Activated T-helper 1 cell treated with anti-CD3 and anti-CD28 coated beads, Interleukin-12 subunit alpha, Interleukin-12 subunit beta, Interleukin-2, Interleukin-4 antibody, amounts not matched to agents 30 ng/mL and 10 ng/mL and 1 ng/mL, durations not matched to agents 14 hours and 24 hours and 36 hours (primary cell): ENCODE measurements at regions of chr1 and their contacts with region 1.

Region 1: DNA sequence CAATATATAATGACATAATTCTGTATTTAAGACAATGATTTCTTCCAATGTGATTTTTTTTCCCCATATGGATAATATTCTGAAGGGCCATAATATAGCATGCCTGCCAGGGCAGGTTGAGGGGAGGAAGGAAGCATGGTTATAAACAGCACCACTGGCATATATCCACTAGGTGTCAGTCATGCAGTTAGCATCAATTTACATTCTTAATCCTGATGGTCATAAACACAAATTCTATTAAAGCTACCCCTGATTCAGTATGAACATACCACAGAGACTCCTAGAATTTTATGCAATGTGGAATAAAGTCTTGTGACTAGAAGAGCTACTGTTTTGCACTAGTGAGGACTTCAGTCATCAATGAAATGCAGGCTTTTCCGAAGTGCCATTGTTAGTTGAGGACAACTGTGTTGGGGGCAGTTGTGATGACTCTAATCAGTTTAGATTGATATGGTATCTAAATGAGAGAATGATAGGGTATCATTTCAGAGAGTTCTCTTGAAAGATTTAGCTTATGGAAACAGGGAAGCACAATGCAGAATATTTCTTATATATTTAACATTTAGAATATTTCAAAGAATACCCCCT is 342.7 kb upstream of the NR5A2 start:
- DNase-seq: no peak
- H3K4me3 Mint-ChIP-seq: no peak overlapping the region
- H3K27ac Mint-ChIP-seq: no peak overlapping the region
- H3K4me1 Mint-ChIP-seq: no peaks in the 10 kb centered on the region
- H3K27me3 Mint-ChIP-seq: peaks cover 23% of the 10 kb centered on the region

Region 2: GRCh38 chr1:200038981-200039848 is 354.4 kb after region 1 on chr1:
- intact Hi-C with region 1: loop called (anchors 5 kb)
- DNase-seq: no peak
- H3K4me3 Mint-ChIP-seq: peak overlapping the region; percentile 72
- H3K27ac Mint-ChIP-seq: no peak overlapping the region
- H3K4me1 Mint-ChIP-seq: peaks cover 27% of the 10 kb centered on the region
- H3K27me3 Mint-ChIP-seq: peaks cover 77% of the 10 kb centered on the region

Region 3: DNA sequence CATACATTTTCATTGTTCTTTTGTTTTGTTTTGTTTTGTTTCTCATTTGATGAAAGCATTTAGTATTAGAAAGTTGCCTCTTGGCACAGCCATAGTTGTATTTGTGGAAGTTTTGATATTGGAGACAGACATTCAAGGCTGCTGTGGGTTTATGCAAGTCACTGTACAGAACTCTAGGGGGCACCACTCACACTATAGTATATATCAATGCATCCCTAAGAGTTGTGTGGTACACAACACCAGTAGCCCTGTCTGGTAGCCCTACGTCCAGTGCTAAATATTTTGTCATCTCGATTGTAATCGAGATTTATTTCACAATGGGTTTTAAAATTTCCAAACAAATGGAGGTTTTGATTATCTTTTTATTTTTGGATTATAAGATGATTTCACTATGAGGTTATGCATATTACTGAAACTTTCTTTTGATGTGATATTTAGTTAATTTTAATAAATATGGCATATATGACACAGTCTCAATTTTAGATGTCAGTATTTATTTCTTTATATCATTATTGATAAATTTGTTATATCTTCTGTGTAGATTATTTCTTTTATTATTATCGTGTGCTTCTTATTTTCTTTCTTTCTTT is 455.0 kb after region 1 on chr1:
- intact Hi-C with region 1: loop called (anchors 5 kb)
- DNase-seq: no peak
- H3K4me3 Mint-ChIP-seq: no peak overlapping the region
- H3K27ac Mint-ChIP-seq: no peak overlapping the region
- H3K4me1 Mint-ChIP-seq: peaks cover 29% of the 10 kb centered on the region
- H3K27me3 Mint-ChIP-seq: peaks cover 11% of the 10 kb centered on the region

Region 4: DNA sequence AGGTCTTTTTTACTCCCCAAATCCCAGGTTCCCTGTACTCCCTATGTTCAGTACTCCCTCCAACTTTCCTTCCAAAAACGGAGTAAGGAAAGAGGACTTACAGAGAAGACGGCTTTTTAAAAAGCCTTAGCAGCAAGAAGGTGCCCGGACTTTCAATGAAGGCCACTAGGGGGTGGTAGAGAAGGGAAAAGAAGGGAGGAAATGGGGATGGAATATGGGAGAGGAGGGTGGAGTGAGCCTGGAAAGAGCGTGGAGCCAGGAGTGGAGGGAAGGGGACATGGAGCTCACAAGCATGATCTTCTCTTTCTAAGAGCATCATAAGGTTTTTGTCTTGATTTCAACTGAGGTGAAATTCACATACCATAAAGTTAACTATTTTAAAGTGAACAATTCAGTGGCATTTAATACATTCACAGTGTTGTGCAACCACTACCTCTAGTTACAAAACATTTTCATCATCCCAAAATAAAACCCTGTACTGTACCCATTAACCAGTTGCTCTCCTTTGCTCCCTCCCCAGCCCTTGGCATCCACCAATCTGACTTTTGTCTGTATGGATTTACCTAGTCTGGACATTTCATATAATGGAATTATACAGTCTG is 595.1 kb after region 1 on chr1:
- intact Hi-C with region 1: loop called (anchors 1 kb)
- DNase-seq: no peak
- H3K4me3 Mint-ChIP-seq: no peak overlapping the region
- H3K27ac Mint-ChIP-seq: no peak overlapping the region
- H3K4me1 Mint-ChIP-seq: no peaks in the 10 kb centered on the region
- H3K27me3 Mint-ChIP-seq: peaks cover 10% of the 10 kb centered on the region

Region 5: GRCh38 chr1:200302192-200302920 is 617.6 kb after region 1 on chr1:
- intact Hi-C with region 1: loop called (anchors 10 kb)
- DNase-seq: peak; percentile 53
- H3K4me3 Mint-ChIP-seq: peak overlapping the region; percentile 83
- H3K27ac Mint-ChIP-seq: no peak overlapping the region
- H3K4me1 Mint-ChIP-seq: peaks cover 23% of the 10 kb centered on the region
- H3K27me3 Mint-ChIP-seq: peaks cover 17% of the 10 kb centered on the region